Gastrocnemius medialis (tissue), 4 donors: ENCODE measurements at regions of chr4 and their contacts with region 1.

Region 1: DNA sequence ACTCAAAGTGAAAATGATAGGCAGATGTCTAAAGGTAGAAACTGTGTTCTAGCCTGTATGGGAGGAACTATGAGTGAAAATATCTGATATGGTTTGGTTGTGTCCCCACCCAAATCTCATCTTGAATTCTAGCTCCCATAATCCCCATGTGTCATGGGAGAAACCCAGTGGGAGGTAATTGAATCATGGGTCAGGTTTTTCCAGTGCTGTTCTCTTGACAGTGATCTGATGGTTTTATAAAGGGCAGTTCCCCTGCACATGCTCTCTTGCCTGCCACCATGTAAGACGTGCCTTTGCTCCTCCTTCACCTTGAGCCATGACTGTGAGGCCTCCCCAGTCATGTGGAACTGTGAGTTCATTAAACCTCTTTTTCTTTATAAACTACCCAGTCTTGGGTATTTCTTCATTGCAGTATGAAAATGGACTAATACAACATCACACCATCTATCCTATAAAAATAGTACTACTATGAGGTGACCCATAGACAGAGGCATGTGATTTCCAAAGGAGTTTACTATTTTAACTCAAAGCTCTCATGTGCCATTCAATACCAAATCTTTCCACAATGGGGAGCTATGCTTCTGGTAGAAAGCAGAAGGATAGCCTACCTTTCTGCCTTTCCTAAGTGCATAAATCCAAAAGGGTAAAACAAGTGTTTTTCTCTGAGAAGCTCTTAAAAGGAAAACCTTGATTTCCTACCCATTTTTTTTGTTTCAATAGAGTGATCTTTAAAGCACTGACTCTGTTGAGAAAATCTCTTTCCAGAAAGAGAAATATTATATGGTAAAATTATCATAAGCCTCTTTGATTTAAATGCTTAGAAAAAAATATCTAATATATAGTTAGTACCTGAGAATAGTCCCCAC is 38.8 kb downstream of the SEC31A start:
- DNase-seq: no peak
- ATAC-seq: peak in 1 of 2 donors; percentile 60
- H3K4me3 ChIP-seq: no peak overlapping the region
- H3K27ac ChIP-seq: no peak overlapping the region
- H3K4me1 ChIP-seq: no peaks in the 10 kb centered on the region
- H3K27me3 ChIP-seq: no peaks in the 10 kb centered on the region
- CTCF ChIP-seq: peak in 2 of 5 experiments; percentile 23 to 36
- POLR2A ChIP-seq: no peak

Region 2: GRCh38 chr4:83440899-83441298 is 588.8 kb after region 1 on chr4:
- in situ Hi-C with region 1: loop called in 1 of 4 experiments (anchors 25 kb)
- intact Hi-C with region 1: no loop called
- DNase-seq: no peak
- ATAC-seq: no peak
- H3K4me3 ChIP-seq: no peak overlapping the region
- H3K27ac ChIP-seq: no peak overlapping the region
- H3K4me1 ChIP-seq: no peaks in the 10 kb centered on the region
- H3K27me3 ChIP-seq: no peaks in the 10 kb centered on the region
- CTCF ChIP-seq: no peak
- POLR2A ChIP-seq: no peak